WTC11 (cell line): ENCODE measurements at regions of chr2 and their contacts with region 1.

Region 1: GRCh38 chr2:20661067-20661980 is 5.6 kb upstream of the GDF7 start:
- DNase-seq: peak; percentile 76
- ATAC-seq: peak; percentile 70
- H3K4me3 Mint-ChIP-seq: no peak overlapping the region
- H3K27ac Mint-ChIP-seq: no peak overlapping the region
- H3K4me1 Mint-ChIP-seq: peaks cover 21% of the 10 kb centered on the region
- H3K27me3 Mint-ChIP-seq: peaks cover 67% of the 10 kb centered on the region
- CTCF ChIP-seq: peak; percentile 92

Region 2: GRCh38 chr2:20457653-20458630 is 203.4 kb before region 1 on chr2:
- CTCF ChIA-PET with region 1: no interaction called
- POLR2A ChIA-PET with region 1: no interaction called
- DNase-seq: no peak
- ATAC-seq: no peak
- H3K4me3 Mint-ChIP-seq: no peak overlapping the region
- H3K27ac Mint-ChIP-seq: no peak overlapping the region
- H3K4me1 Mint-ChIP-seq: peaks cover 8% of the 10 kb centered on the region
- H3K27me3 Mint-ChIP-seq: peaks cover 28% of the 10 kb centered on the region
- CTCF ChIP-seq: no peak

Region 3: DNA sequence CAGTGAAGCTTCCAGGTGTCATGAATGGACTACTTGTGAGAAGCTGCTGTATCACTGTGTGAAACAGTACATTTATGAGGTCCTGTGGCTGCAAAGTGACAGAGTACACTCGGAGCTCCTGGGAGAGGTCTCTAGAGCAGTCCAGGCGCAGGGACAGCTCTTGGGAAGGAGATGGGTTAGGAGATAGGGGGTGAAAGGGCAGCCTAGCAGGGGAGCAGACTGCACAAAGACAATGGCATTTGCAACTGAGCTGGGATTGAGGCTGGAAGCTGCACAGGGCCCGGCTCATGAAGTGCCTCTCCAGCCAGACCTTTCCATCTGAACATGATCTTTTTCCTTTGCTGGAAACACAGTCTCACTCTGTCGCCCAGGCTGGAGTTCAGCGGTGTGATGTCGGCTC is 130.8 kb before region 1 on chr2:
- CTCF ChIA-PET with region 1: no interaction called
- POLR2A ChIA-PET with region 1: no interaction called
- DNase-seq: no peak
- ATAC-seq: no peak
- H3K4me3 Mint-ChIP-seq: no peak overlapping the region
- H3K27ac Mint-ChIP-seq: no peak overlapping the region
- H3K4me1 Mint-ChIP-seq: peaks cover 14% of the 10 kb centered on the region
- H3K27me3 Mint-ChIP-seq: peaks cover 4% of the 10 kb centered on the region; the same call in 1 of the 2 replicates
- CTCF ChIP-seq: no peak

Region 4: DNA sequence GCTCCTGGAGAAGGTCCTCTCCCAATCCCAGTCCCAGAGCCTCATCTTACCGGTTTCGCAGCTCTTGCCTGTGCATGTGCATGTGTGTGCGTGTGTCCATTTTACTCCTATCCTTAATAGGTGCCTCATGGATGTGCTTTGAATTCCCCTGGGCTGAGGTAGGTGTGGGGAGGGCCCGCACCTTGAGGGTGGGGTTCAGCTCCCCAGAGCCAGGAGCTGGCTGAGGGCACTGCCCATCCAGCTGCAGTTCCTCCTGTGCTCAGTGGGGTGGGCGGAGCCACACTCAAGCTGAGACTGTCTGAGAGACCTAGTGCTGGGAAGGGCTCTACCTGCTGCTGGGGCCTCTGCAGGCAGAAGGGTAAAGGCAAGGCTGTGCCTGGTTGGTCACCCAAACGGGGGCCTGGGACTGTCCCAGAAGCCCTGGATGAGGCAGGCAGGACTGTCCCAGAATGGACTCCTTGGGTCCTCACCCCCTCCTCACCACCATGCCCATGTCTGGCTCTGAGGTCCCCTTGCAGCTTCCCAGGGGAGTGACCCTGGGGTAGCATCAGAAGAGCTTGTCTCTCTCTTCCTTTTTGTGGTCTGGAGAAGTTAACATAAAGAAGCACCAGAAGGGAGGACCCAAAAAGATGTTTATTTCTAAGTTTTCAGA is 14.5 kb after region 1 on chr2:
- CTCF ChIA-PET with region 1: interaction called, 329 read pairs
- POLR2A ChIA-PET with region 1: interaction called, 7 read pairs
- DNase-seq: peak; percentile 60
- ATAC-seq: peak; percentile 69
- H3K4me3 Mint-ChIP-seq: no peak overlapping the region
- H3K27ac Mint-ChIP-seq: no peak overlapping the region
- H3K4me1 Mint-ChIP-seq: peaks cover 52% of the 10 kb centered on the region
- H3K27me3 Mint-ChIP-seq: peaks cover 50% of the 10 kb centered on the region
- CTCF ChIP-seq: no peak

Region 5: GRCh38 chr2:20781656-20782265 is 120.4 kb after region 1 on chr2:
- CTCF ChIA-PET with region 1: interaction called, 19 read pairs
- POLR2A ChIA-PET with region 1: no interaction called
- DNase-seq: peak; percentile 36
- ATAC-seq: peak; percentile 86
- H3K4me3 Mint-ChIP-seq: no peak overlapping the region
- H3K27ac Mint-ChIP-seq: no peak overlapping the region
- H3K4me1 Mint-ChIP-seq: no peaks in the 10 kb centered on the region
- H3K27me3 Mint-ChIP-seq: no peaks in the 10 kb centered on the region
- CTCF ChIP-seq: peak; percentile 48

Region 6: GRCh38 chr2:20822535-20823490 is 161.5 kb after region 1 on chr2 and contains the start of gene LDAH:
- CTCF ChIA-PET with region 1: interaction called, 13 read pairs
- POLR2A ChIA-PET with region 1: no interaction called
- DNase-seq: peak; percentile 92
- ATAC-seq: peak; percentile 92
- H3K4me3 Mint-ChIP-seq: peak within 1 kb of the TSS; percentile 96
- H3K27ac Mint-ChIP-seq: peak within 1 kb of the TSS; percentile 95
- H3K4me1 Mint-ChIP-seq: peaks cover 6% of the 10 kb centered on the region; the same call in 1 of the 2 replicates
- H3K27me3 Mint-ChIP-seq: peaks cover 12% of the 10 kb centered on the region
- CTCF ChIP-seq: no peak
- total RNA-seq, gene LDAH: 16.1 to 20.5 TPM (median 17.7 TPM) in 3 replicates

Region 7: DNA sequence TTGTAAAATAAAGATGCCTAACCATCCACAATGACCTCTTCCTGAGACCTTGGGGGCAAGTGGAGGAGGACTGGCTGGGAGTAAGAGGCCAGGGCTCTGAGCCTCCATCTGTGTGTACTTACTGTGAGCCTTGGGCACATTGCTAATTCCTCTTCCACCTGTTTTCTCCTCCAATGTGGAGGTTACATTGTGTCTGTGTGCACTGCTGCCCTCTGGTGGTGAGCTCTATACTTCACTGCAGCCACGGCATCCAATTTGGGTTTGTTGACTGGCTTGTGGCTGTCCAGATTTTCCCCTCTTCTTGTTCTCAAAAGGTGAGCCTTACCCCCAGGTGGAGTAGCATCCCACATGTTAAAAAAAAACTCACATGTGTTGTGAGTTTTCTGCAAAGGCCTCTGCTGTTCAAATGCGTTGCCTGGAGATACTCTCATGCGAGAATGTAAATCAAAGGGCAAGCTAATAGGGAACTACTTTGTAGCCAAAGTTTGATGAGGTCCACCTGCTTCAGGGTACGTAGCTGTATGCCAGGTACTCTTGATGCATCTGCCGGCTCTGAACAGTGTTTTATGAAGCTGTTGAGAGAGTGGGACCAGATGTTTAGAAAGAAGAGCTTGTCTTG is 301.7 kb after region 1 on chr2:
- CTCF ChIA-PET with region 1: interaction called, 76 read pairs
- POLR2A ChIA-PET with region 1: no interaction called
- DNase-seq: peak; percentile 87
- ATAC-seq: peak; percentile 87
- H3K4me3 Mint-ChIP-seq: no peak overlapping the region
- H3K27ac Mint-ChIP-seq: no peak overlapping the region
- H3K4me1 Mint-ChIP-seq: no peaks in the 10 kb centered on the region
- H3K27me3 Mint-ChIP-seq: no peaks in the 10 kb centered on the region; the same call in 1 of the 2 replicates
- CTCF ChIP-seq: peak; percentile 82

Region 8: DNA sequence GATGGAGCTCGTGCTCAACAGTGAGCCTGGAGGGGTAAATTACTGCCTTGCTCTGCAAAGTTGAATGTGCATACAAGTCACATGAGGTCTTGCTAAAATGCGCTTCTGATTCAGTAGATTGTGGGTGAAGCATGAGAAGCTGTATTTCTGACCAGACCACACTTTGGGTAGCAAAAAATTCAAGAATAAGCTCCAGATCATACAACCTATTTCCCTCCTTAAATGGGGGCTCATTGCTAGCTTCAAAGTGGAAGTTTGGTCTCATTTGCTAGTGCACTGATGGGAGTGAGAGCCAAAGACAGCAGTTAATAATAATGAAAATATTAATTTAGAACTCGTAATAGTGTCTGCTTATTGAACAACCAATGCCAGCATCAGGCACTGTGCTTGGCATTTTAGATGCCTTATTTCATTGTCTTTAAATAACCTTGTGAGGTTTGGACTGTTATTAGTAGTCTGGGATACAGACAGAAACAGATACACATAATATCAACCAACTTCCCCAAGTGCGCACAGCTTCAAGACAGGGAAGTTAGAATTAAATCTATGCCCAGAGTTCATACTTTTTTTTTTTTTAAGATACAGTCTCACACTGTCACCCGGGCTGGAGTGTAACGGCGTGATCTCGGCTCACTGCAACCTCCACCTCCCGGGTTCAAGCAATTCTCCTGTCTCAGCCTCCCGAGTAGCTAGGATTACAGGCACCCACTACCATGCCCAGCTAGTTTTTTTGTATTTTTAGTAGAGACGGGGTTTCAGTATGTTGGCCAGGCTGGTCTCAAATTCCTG is 364.6 kb after region 1 on chr2:
- CTCF ChIA-PET with region 1: interaction called, 18 read pairs
- POLR2A ChIA-PET with region 1: no interaction called
- DNase-seq: no peak
- ATAC-seq: no peak
- H3K4me3 Mint-ChIP-seq: no peak overlapping the region
- H3K27ac Mint-ChIP-seq: 0 out of 2 replicates have a peak overlapping the region, but pooled peaks have one; percentile 21
- H3K4me1 Mint-ChIP-seq: no peaks in the 10 kb centered on the region
- H3K27me3 Mint-ChIP-seq: no peaks in the 10 kb centered on the region
- CTCF ChIP-seq: no peak